ENCODE measurements at regions of chr10 and their contacts with region 1.

Region 1: GRCh38 chr10:5614155-5614721 is 52.2 kb downstream of the ASB13 start:
- DNase-seq: peak; percentile 38
- ATAC-seq: no peak
- H3K4me3 ChIP-seq: no peak overlapping the region
- H3K27ac ChIP-seq: peak overlapping the region; percentile 91
- H3K4me1 ChIP-seq: peaks cover 61% of the 10 kb centered on the region
- H3K27me3 ChIP-seq: no peaks in the 10 kb centered on the region
- CTCF ChIP-seq: no peak

Region 2: GRCh38 chr10:5461914-5462840 is 152.1 kb before region 1 on chr10:
- CTCF ChIA-PET with region 1: no interaction called
- POLR2A ChIA-PET with region 1: no interaction called
- intact Hi-C with region 1: no loop called
- DNase-seq: no peak
- ATAC-seq: no peak
- H3K4me3 ChIP-seq: no peak overlapping the region
- H3K27ac ChIP-seq: no peak overlapping the region
- H3K4me1 ChIP-seq: peaks cover 22% of the 10 kb centered on the region
- H3K27me3 ChIP-seq: no peaks in the 10 kb centered on the region
- CTCF ChIP-seq: no peak

Region 3: GRCh38 chr10:5595591-5596590 is 18.3 kb before region 1 on chr10:
- CTCF ChIA-PET with region 1: interaction called, 3 read pairs
- POLR2A ChIA-PET with region 1: interaction called, 12 read pairs
- intact Hi-C with region 1: loop called (anchors 2 kb)
- DNase-seq: peak; percentile 89
- ATAC-seq: peak; percentile 73
- H3K4me3 ChIP-seq: peak overlapping the region; percentile 65
- H3K27ac ChIP-seq: peak overlapping the region; percentile 100
- H3K4me1 ChIP-seq: peaks cover 39% of the 10 kb centered on the region
- H3K27me3 ChIP-seq: no peaks in the 10 kb centered on the region
- CTCF ChIP-seq: no peak